ENCODE measurements at regions of chr20 and their contacts with region 1.

Region 1: DNA sequence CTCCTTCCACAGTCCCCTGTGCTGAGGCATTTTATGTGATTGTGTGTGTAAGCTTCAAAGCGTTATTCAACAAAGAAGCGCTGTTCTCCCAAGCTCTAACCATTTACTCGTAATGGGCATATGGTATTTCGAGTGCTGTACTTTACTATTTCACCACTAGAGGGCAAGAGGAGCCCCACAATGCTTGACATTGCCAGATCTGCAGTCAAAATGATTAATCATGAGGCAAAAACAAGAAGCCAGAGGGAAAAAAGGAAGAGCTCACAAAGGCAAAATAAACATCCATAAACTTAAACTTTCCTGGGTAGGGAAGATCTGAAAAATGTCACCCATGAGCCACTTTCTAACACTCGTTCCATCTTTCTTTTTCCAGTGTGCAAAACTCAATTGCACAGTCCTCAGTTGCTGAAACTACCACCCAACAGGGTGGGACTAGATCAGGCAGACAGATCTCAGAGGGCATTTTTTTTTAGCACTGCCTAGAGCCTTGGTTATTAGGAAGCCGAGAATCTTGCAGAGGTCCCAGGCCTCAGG is 215.0 kb upstream of the PLCB4 start:
- DNase-seq: peak in 1 of 2 experiments; percentile 66
- H3K4me3 ChIP-seq: no peak overlapping the region
- H3K4me3 Mint-ChIP-seq: no peak overlapping the region
- H3K27ac Mint-ChIP-seq: no peak overlapping the region
- H3K4me1 ChIP-seq: peaks cover 4% of the 10 kb centered on the region; the same call in 1 of the 2 replicates
- H3K4me1 Mint-ChIP-seq: no peaks in the 10 kb centered on the region
- H3K27me3 ChIP-seq: no peaks in the 10 kb centered on the region
- H3K27me3 Mint-ChIP-seq: no peaks in the 10 kb centered on the region
- CTCF ChIP-seq: peak; percentile 74 to 78

Region 2: DNA sequence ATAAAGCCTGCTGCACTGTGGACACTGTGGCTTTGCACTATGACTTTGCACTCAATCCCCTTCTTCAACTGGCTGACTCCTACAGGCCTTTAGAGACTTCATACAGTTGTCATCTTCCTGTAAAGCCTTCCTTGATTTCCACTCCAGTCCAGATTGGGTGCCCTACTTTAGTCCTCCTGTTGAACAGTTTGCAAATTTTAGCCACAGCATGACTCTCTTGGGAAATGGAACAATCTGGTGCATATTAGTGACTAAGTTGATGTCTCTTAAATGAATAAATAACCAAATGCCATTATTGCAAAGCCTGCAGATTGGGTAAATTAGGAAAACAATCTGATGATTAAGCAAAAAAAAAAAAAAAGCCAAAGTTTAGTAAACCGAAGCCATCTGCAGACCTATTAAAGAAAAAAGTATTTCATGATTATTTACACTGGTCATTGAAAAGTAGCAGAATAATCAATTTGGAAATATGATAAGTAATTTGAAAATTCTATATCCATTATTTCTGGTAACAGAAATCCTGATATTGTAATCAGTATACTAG is 227.6 kb after region 1 on chr20:
- CTCF ChIA-PET with region 1: no interaction called
- POLR2A ChIA-PET with region 1: no interaction called
- intact Hi-C with region 1: loop called (anchors 10 kb)
- DNase-seq: no peak
- H3K4me3 ChIP-seq: no peak overlapping the region
- H3K4me3 Mint-ChIP-seq: no peak overlapping the region
- H3K27ac Mint-ChIP-seq: no peak overlapping the region
- H3K4me1 ChIP-seq: no peaks in the 10 kb centered on the region
- H3K4me1 Mint-ChIP-seq: no peaks in the 10 kb centered on the region
- H3K27me3 ChIP-seq: no peaks in the 10 kb centered on the region
- H3K27me3 Mint-ChIP-seq: peaks cover 4% of the 10 kb centered on the region
- CTCF ChIP-seq: no peak

Region 3: DNA sequence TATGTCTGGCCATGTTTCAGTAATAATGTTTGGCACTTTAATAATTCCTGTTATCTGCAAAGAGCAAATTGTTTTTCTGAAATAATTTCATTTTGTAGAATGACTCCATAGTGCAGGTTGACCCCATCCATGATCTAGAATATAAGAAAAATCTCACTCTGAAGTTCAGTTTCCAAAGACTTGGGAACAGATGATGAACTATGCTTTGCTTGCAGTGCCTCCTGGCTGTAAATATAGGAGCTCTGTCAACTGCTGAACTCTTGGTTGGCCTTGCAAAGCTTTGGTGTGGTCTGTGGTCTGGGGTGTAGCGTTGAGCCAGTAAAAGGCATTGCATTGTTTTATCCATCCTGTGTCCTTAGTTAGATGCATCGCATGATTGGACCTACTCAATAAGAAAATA is 319.0 kb after region 1 on chr20:
- CTCF ChIA-PET with region 1: interaction called, 3 read pairs
- POLR2A ChIA-PET with region 1: no interaction called
- intact Hi-C with region 1: loop called (anchors 5 kb)
- DNase-seq: no peak
- H3K4me3 ChIP-seq: no peak overlapping the region
- H3K4me3 Mint-ChIP-seq: no peak overlapping the region
- H3K27ac Mint-ChIP-seq: no peak overlapping the region
- H3K4me1 ChIP-seq: no peaks in the 10 kb centered on the region
- H3K4me1 Mint-ChIP-seq: no peaks in the 10 kb centered on the region
- H3K27me3 ChIP-seq: no peaks in the 10 kb centered on the region
- H3K27me3 Mint-ChIP-seq: peaks cover 5% of the 10 kb centered on the region
- CTCF ChIP-seq: peak in 1 of 2 experiments; percentile 40

Measured in Caco-2 (cell line).